CD14-positive monocyte (primary cell): ENCODE measurements at regions of chr6 and their contacts with region 1.

Region 1: GRCh38 chr6:55069132-55069781 is 105.1 kb upstream of the HCRTR2 start:
- DNase-seq: peak; percentile 32 to 39 (median 38)
- H3K4me3 ChIP-seq: no peak overlapping the region
- H3K4me3 Mint-ChIP-seq: no peak overlapping the region
- H3K27ac ChIP-seq: no peak overlapping the region
- H3K27ac Mint-ChIP-seq: no peak overlapping the region
- H3K4me1 ChIP-seq: no peaks in the 10 kb centered on the region
- H3K4me1 Mint-ChIP-seq: no peaks in the 10 kb centered on the region
- H3K27me3 ChIP-seq: no peaks in the 10 kb centered on the region
- H3K27me3 Mint-ChIP-seq: peaks cover 0 to 3% (median 2%) of the 10 kb centered on the region in 3 donors
- CTCF ChIP-seq: peak; percentile 85

Region 2: GRCh38 chr6:53979468-53980067 is 1089.7 kb before region 1 on chr6:
- intact Hi-C with region 1: loop called in 1 of 2 experiments (anchors 5 kb)
- DNase-seq: peak; percentile 2 to 17 (median 5)
- H3K4me3 ChIP-seq: no peak overlapping the region
- H3K4me3 Mint-ChIP-seq: no peak overlapping the region
- H3K27ac ChIP-seq: no peak overlapping the region
- H3K27ac Mint-ChIP-seq: no peak overlapping the region
- H3K4me1 ChIP-seq: no peaks in the 10 kb centered on the region
- H3K4me1 Mint-ChIP-seq: no peaks in the 10 kb centered on the region
- H3K27me3 ChIP-seq: no peaks in the 10 kb centered on the region
- H3K27me3 Mint-ChIP-seq: peaks cover 0 to 4% (median 2%) of the 10 kb centered on the region in 3 donors
- CTCF ChIP-seq: peak; percentile 85

Region 3: GRCh38 chr6:54717849-54718455 is 351.3 kb before region 1 on chr6:
- intact Hi-C with region 1: loop called in 1 of 2 experiments (anchors 5 kb)
- DNase-seq: peak; percentile 13 to 56 (median 33)
- H3K4me3 ChIP-seq: no peak overlapping the region
- H3K4me3 Mint-ChIP-seq: no peak overlapping the region
- H3K27ac ChIP-seq: no peak overlapping the region
- H3K27ac Mint-ChIP-seq: no peak overlapping the region
- H3K4me1 ChIP-seq: no peaks in the 10 kb centered on the region
- H3K4me1 Mint-ChIP-seq: no peaks in the 10 kb centered on the region
- H3K27me3 ChIP-seq: no peaks in the 10 kb centered on the region
- H3K27me3 Mint-ChIP-seq: no peaks in the 10 kb centered on the region
- CTCF ChIP-seq: peak; percentile 97